Panc1 (cell line): ENCODE measurements at regions of chr1 and their contacts with region 1.

Region 1: GRCh38 chr1:88180449-88181108 is 503.5 kb upstream of the PKN2 start:
- DNase-seq: peak; percentile 75
- ATAC-seq: peak; percentile 98
- H3K4me3 ChIP-seq: no peak overlapping the region
- H3K27ac ChIP-seq: no peak overlapping the region
- H3K4me1 ChIP-seq: no peaks in the 10 kb centered on the region
- H3K27me3 ChIP-seq: no peaks in the 10 kb centered on the region
- CTCF ChIP-seq: peak; percentile 98

Region 2: DNA sequence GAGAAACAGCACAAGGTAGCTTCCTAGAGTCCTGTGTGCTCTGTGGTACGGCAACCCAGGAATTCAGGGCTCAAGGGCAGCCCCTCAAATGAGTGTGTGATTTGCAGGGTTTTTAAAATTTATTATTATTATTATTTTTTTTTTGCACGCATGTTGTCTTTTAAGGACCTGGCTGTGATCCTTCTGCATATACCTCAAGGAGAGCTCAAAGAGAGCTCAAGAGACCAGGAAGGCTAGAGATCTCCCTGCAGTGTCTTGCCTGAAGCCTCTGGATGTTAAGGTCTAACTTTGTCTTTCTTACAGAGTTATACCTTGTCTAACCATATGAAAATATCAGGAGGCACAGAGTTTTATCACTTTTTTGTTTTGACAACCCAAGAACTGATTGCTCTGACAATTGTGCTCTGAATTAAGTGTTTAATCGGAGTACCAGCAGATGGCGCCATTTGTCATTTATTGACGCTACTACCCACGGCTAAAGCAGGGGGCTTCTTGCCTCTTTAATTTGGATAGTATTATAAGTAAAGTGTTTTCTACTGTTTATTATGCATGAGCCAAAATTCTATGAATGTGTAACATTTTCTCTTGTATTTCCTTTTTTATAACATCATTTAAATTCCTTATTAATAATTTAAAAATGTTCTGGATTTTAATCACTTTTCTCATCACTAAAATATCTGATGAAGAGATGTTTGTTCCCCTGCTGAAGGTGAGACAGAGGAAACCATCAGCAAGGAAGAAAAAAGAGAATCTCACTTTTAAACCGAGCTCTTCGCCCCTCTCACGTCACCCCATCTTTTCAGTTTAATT is 887.7 kb before region 1 on chr1:
- CTCF ChIA-PET with region 1: no interaction called
- POLR2A ChIA-PET with region 1: no interaction called
- in situ Hi-C with region 1: no loop called
- intact Hi-C with region 1: loop called (anchors 5 kb)
- DNase-seq: peak; percentile 36
- ATAC-seq: peak; percentile 88
- H3K4me3 ChIP-seq: no peak overlapping the region
- H3K27ac ChIP-seq: no peak overlapping the region
- H3K4me1 ChIP-seq: no peaks in the 10 kb centered on the region
- H3K27me3 ChIP-seq: no peaks in the 10 kb centered on the region
- CTCF ChIP-seq: peak; percentile 84

Region 3: DNA sequence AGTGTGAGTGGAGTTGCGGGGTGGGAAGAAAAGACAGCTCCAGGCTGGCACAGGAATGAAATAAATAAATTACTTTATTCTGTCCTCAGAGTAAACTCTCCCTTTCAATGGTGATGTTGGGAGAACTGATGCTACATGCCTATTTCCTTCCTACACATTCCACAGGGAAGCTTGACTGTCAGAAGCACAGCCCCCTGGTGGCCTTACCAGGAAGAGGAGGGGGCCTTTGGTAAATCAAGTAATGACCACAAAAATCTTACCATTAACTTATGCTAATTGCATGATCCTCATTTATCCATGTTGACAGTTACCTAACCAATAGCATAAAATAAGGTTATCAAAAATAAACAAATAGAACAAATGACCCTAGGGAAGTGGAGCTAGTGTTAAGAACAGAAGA is 101.5 kb before region 1 on chr1:
- CTCF ChIA-PET with region 1: no interaction called
- POLR2A ChIA-PET with region 1: no interaction called
- in situ Hi-C with region 1: no loop called
- intact Hi-C with region 1: no loop called
- DNase-seq: no peak
- ATAC-seq: no peak
- H3K4me3 ChIP-seq: no peak overlapping the region
- H3K27ac ChIP-seq: no peak overlapping the region
- H3K4me1 ChIP-seq: no peaks in the 10 kb centered on the region
- H3K27me3 ChIP-seq: no peaks in the 10 kb centered on the region
- CTCF ChIP-seq: peak; percentile 52

Region 4: GRCh38 chr1:88302843-88303486 is 122.4 kb after region 1 on chr1:
- CTCF ChIA-PET with region 1: no interaction called
- POLR2A ChIA-PET with region 1: no interaction called
- in situ Hi-C with region 1: no loop called
- intact Hi-C with region 1: loop called (anchors 2 kb)
- DNase-seq: peak; percentile 5
- ATAC-seq: no peak
- H3K4me3 ChIP-seq: no peak overlapping the region
- H3K27ac ChIP-seq: no peak overlapping the region
- H3K4me1 ChIP-seq: no peaks in the 10 kb centered on the region
- H3K27me3 ChIP-seq: no peaks in the 10 kb centered on the region; the same call in 1 of the 2 replicates
- CTCF ChIP-seq: peak; percentile 63

Region 5: DNA sequence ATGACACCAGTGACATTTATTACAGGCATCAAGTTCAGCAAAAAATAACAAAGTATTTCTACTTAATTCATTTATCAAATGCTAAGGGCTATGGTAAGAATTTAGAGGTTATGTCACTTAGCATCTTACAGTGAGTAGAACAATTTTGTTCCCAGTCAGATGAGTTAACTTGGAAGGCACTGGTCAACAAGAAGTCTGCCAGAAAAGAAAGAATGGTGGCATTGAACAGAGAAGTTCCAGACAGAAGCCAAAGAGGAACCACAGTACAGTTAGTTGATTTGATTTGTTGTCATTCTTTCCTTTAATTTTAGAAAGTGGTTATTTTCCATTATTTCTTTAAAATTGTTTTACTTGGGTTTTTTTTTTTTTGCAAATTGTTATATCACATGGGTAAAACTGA is 271.3 kb after region 1 on chr1:
- CTCF ChIA-PET with region 1: no interaction called
- POLR2A ChIA-PET with region 1: no interaction called
- in situ Hi-C with region 1: no loop called
- intact Hi-C with region 1: loop called (anchors 10 kb)
- DNase-seq: no peak
- ATAC-seq: no peak
- H3K4me3 ChIP-seq: no peak overlapping the region
- H3K27ac ChIP-seq: no peak overlapping the region
- H3K4me1 ChIP-seq: no peaks in the 10 kb centered on the region
- H3K27me3 ChIP-seq: peaks cover 17% of the 10 kb centered on the region; the same call in 1 of the 2 replicates
- CTCF ChIP-seq: no peak

Region 6: DNA sequence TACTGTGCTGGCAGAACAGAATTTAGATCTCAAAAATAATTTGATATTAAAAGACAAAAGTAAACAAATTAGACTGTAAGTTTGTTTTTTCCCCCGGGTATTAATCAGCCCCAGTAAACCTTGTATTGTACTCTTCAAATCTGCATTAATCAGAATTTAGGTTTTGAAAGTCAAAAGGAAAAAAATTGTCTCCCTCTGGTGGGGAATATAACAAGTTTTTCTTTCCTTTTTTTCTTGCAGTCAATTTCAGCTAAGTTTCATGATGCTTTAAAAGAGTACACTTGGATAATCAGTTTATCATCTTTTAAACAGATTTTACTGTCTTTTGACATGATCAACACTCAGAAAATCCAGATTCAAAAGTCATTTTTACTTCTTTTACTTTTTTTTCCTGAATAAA is 369.0 kb after region 1 on chr1:
- CTCF ChIA-PET with region 1: no interaction called
- POLR2A ChIA-PET with region 1: no interaction called
- in situ Hi-C with region 1: no loop called
- intact Hi-C with region 1: loop called (anchors 5 kb)
- DNase-seq: no peak
- ATAC-seq: no peak
- H3K4me3 ChIP-seq: no peak overlapping the region
- H3K27ac ChIP-seq: no peak overlapping the region
- H3K4me1 ChIP-seq: no peaks in the 10 kb centered on the region
- H3K27me3 ChIP-seq: peaks cover 7% of the 10 kb centered on the region; the same call in 1 of the 2 replicates
- CTCF ChIP-seq: peak; percentile 36; the same call in 1 of the 2 replicates

Region 7: GRCh38 chr1:88800382-88801051 is 619.9 kb after region 1 on chr1:
- CTCF ChIA-PET with region 1: no interaction called
- POLR2A ChIA-PET with region 1: no interaction called
- in situ Hi-C with region 1: no loop called
- intact Hi-C with region 1: loop called (anchors 5 kb)
- DNase-seq: peak; percentile 15
- ATAC-seq: peak; percentile 84
- H3K4me3 ChIP-seq: no peak overlapping the region
- H3K27ac ChIP-seq: no peak overlapping the region
- H3K4me1 ChIP-seq: no peaks in the 10 kb centered on the region
- H3K27me3 ChIP-seq: no peaks in the 10 kb centered on the region
- CTCF ChIP-seq: peak; percentile 82; the same call in 1 of the 2 replicates